Esophagus squamous epithelium (tissue), 5 donors: ENCODE measurements at regions of chr12 and their contacts with region 1.

Region 1: GRCh38 chr12:122040579-122041386 is 19.1 kb downstream of the BCL7A start:
- DNase-seq: no peak
- H3K4me3 ChIP-seq: no peak overlapping the region
- H3K27ac ChIP-seq: no peak overlapping the region
- H3K4me1 ChIP-seq: peaks cover 0 to 6% (median 5%) of the 10 kb centered on the region in 3 donors
- H3K27me3 ChIP-seq: no peaks in the 10 kb centered on the region
- CTCF ChIP-seq: no peak
- POLR2A ChIP-seq: no peak

Region 2: DNA sequence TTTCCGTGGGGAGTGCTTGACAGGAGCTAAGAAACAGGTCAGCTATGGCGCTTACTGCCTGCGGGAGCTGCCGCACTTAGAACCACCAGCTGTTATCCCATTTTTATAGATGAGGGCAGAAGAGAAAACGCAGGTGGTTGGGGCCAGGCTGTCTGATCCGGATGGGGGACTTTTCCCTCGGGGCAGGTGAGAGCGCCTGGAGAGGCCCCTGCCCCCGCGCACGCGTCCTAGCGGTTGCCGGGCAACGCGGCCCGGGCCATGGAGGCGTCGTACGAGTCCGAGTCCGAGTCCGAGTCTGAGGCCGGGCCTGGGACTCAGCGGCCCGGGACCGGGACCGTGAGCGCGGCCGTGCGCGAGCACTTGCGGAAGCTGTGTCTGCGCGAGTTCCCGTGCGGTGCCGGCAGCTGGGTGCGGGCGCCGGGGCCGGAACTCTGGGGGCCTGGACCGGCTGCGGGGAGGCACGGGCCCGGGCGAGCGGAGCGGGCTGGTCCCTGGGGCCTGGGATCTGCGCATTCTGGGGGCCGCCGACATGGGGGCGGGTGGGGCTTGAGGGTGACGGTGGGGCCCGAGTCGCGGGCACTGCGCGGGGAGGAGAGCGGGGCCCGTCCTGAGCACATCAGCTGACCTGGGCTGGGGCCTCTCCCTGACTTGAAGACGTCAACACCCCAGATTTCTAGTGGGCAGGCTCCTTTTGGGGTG is 142.3 kb after region 1 on chr12 and contains the start of gene LRRC43:
- intact Hi-C with region 1: loop called (anchors 10 kb)
- DNase-seq: no peak
- H3K4me3 ChIP-seq: peak within 1 kb of the TSS; percentile 38 to 71 (median 54)
- H3K27ac ChIP-seq: no peak within 1 kb of the TSS
- H3K4me1 ChIP-seq: peaks cover 0 to 12% (median 0%) of the 10 kb centered on the region in 3 donors
- H3K27me3 ChIP-seq: peaks cover 0 to 19% (median 0%) of the 10 kb centered on the region in 4 donors
- CTCF ChIP-seq: no peak
- POLR2A ChIP-seq: no peak
- total RNA-seq, gene LRRC43: 0.59 to 0.70 TPM in 2 of 4 donors, not detected in the others